T-cell (primary cell): ENCODE measurements at regions of chr5 and their contacts with region 1.

Region 1: GRCh38 chr5:125446996-125447395 is 700.6 kb upstream of the ZNF608 start:
- DNase-seq: no peak
- ATAC-seq: no peak
- H3K4me3 ChIP-seq: no peak overlapping the region
- H3K4me3 Mint-ChIP-seq: no peak overlapping the region
- H3K27ac ChIP-seq: no peak overlapping the region
- H3K27ac Mint-ChIP-seq: no peak overlapping the region
- H3K4me1 ChIP-seq: no peaks in the 10 kb centered on the region
- H3K4me1 Mint-ChIP-seq: no peaks in the 10 kb centered on the region
- H3K27me3 ChIP-seq: no peaks in the 10 kb centered on the region
- H3K27me3 Mint-ChIP-seq: no peaks in the 10 kb centered on the region

Region 2: DNA sequence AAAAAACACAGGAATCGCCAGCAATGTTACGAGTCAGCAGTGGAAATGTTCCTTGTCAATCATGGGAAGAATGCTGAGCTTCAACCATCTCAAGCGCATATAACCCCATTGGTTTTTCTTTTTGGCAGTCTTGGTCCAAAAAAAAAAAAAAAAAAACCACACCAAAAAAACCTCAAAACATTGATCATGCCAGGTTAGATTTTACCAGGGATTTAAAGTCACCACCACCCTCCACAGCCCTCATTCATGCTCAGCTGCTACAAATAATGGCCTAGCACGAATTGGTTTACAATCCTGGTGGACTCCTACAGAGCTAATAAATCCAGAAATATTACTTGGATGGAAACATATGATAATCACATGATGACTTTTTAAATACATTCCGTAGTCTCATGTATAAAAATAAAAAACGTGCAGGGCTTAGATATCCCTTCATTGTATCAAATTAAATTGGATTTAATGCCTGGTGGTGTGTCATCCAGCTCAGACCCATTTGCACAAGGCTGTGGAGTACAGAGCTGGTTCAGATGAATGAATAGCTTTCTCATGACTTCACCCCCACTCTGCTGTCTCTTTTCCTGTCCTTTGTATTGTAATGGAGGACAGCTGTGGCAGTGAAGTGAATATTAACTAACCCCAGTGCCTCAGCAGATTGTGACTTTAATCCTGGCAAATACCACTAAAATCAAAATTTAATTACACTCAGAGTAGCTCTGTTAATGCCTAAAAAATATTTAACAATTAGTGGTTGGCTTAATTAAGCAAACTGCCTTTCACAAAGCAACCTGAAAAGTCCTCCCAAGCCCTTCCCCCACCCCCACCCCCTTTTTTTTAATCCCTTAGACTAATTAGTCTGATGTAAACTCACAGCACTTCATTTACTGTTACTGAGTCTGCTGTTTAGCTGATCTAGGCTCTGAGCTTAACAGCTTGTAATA is 74.0 kb before region 1 on chr5:
- CTCF ChIA-PET with region 1: no interaction called
- POLR2A ChIA-PET with region 1: interaction called in 1 of 2 experiments, 22 read pairs
- DNase-seq: no peak
- ATAC-seq: no peak
- H3K4me3 ChIP-seq: no peak overlapping the region
- H3K4me3 Mint-ChIP-seq: no peak overlapping the region
- H3K27ac ChIP-seq: no peak overlapping the region
- H3K27ac Mint-ChIP-seq: no peak overlapping the region
- H3K4me1 ChIP-seq: no peaks in the 10 kb centered on the region
- H3K4me1 Mint-ChIP-seq: no peaks in the 10 kb centered on the region
- H3K27me3 ChIP-seq: no peaks in the 10 kb centered on the region
- H3K27me3 Mint-ChIP-seq: no peaks in the 10 kb centered on the region

Region 3: GRCh38 chr5:125463466-125464092 is 16.6 kb after region 1 on chr5:
- CTCF ChIA-PET with region 1: no interaction called
- POLR2A ChIA-PET with region 1: no interaction called
- DNase-seq: no peak
- ATAC-seq: no peak
- H3K4me3 ChIP-seq: no peak overlapping the region
- H3K4me3 Mint-ChIP-seq: no peak overlapping the region
- H3K27ac ChIP-seq: no peak overlapping the region
- H3K27ac Mint-ChIP-seq: no peak overlapping the region
- H3K4me1 ChIP-seq: no peaks in the 10 kb centered on the region
- H3K4me1 Mint-ChIP-seq: no peaks in the 10 kb centered on the region
- H3K27me3 ChIP-seq: no peaks in the 10 kb centered on the region
- H3K27me3 Mint-ChIP-seq: no peaks in the 10 kb centered on the region

Region 4: GRCh38 chr5:125874717-125875116 is 427.7 kb after region 1 on chr5:
- CTCF ChIA-PET with region 1: no interaction called
- POLR2A ChIA-PET with region 1: no interaction called
- DNase-seq: no peak
- ATAC-seq: no peak
- H3K4me3 ChIP-seq: no peak overlapping the region
- H3K4me3 Mint-ChIP-seq: no peak overlapping the region
- H3K27ac ChIP-seq: no peak overlapping the region
- H3K27ac Mint-ChIP-seq: no peak overlapping the region
- H3K4me1 ChIP-seq: no peaks in the 10 kb centered on the region
- H3K4me1 Mint-ChIP-seq: no peaks in the 10 kb centered on the region
- H3K27me3 ChIP-seq: no peaks in the 10 kb centered on the region
- H3K27me3 Mint-ChIP-seq: no peaks in the 10 kb centered on the region